ENCODE measurements at regions of chr7 and their contacts with region 1.

Region 1: DNA sequence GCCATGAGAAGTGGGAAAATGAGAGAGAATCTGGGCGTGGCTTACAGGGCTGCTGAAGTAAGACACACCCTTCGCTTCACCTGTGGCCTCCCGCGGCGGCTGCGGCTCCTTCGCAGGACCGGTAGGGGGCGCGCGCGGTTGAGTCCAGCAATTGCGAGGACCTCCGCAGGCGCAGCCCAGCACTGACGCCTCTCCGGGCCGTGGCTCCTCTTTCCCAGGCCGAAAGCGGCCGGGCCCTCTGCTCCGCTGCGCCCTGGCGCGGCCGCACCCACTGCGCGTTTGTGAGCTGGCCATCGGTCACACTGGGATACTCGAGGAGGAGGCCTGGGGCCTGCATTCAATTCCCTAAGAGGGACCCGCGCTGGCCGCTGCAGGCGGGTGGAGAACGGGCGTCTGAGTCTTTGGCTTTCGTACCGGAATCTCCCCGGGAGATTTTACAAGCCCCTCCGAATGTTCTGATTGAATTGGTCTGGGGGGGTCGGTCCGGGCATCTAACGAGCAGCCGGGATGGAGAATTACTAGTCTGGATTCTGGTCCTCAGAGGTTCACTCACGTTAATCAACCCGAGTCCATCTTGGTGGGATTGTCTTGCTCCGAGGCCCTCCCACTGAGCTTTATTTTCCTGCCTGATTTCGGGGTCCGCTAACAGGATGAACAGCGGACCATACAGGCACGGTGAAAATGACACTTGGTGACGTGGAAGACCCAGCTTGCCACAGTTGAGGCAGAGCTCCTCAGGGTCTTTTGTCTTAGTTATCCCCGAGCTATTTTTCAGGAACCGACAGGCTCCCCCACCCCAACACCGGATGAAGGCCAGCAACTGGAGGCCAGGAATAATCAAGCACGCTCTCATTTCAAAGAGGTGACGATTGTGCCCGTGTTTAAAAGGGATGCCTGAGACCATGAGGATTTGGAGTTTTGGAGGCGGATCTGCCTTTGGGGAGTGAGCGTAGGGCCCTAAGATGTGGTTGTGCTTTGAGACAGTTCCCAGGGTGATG is at the start of gene LRRD1:
- DNase-seq: peak; percentile 95
- H3K4me3 ChIP-seq: peak within 1 kb of the TSS; percentile 37 to 56
- H3K27ac ChIP-seq: no peak within 1 kb of the TSS
- H3K4me1 ChIP-seq: peaks cover 0 to 4% of the 10 kb centered on the region in 2 experiments; a peak in 1 of 4 replicates
- H3K27me3 ChIP-seq: no peaks in the 10 kb centered on the region
- CTCF ChIP-seq: peak; percentile 88
- EP300 ChIP-seq: no peak
- RAD21 ChIP-seq: peak; percentile 69
- polyA plus RNA-seq, gene LRRD1: 0.03 TPM in 1 of 2 replicates, not detected in the other

Region 2: DNA sequence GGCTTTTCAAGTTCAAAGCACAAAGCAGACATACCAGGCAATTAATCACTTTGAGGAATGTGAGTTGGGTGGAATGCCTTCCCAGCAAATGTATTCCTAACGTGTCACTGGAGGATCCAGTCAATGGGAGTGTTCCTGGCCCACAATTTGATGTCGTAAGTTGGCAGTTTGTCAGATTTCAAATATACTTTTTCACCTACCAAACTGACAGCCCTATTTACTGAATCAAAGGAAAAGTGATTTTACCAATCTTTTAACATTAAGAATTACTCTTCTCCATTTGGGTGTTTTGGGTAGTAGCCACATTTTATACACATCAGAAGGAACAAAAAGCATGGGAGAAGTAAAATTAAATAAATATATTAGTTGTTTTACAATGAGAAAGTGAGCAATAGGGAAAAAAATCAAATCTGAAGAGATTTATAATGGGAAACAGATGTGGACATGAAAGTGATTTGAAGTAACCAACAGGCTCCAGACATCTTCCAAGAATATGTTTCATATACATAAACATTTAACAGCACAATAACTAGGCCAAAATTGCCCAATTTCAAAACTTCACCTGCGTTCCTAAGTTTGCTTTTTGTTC is 521.6 kb before region 1 on chr7:
- CTCF ChIA-PET with region 1: no interaction called
- POLR2A ChIA-PET with region 1: no interaction called
- DNase-seq: no peak
- H3K4me3 ChIP-seq: no peak overlapping the region
- H3K27ac ChIP-seq: peak overlapping the region in 1 of 2 experiments; percentile 16; a peak in 1 of 4 replicates
- H3K4me1 ChIP-seq: peaks cover 8 to 19% of the 10 kb centered on the region in 2 experiments; a peak in 3 of 4 replicates
- H3K27me3 ChIP-seq: no peaks in the 10 kb centered on the region
- CTCF ChIP-seq: no peak
- EP300 ChIP-seq: no peak
- RAD21 ChIP-seq: no peak

Region 3: DNA sequence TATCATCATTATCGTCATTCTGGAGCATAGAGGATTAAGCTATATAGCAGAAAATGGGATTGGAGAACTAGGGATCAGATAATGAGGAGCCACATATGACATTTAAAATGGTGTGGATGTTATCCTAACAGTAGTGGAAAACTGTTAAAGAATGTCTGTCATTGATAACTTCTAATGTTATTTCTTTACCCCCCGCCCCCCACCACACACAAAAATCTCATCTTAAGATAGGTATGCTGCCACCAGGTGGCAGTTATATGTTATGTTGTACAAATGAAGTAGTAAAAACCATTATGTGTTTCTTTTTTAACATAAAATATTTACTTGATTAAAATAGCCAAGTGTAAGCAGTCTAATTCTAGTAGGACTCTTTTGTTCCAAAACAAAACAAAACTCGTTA is 225.6 kb before region 1 on chr7:
- CTCF ChIA-PET with region 1: no interaction called
- POLR2A ChIA-PET with region 1: no interaction called
- DNase-seq: peak; percentile 20
- H3K4me3 ChIP-seq: no peak overlapping the region
- H3K27ac ChIP-seq: no peak overlapping the region
- H3K4me1 ChIP-seq: no peaks in the 10 kb centered on the region; a peak in 1 of 4 replicates
- H3K27me3 ChIP-seq: no peaks in the 10 kb centered on the region
- CTCF ChIP-seq: peak; percentile 65
- EP300 ChIP-seq: no peak
- RAD21 ChIP-seq: no peak; the same call in 1 of the 2 replicates

Region 4: GRCh38 chr7:92057362-92057761 is 121.9 kb before region 1 on chr7:
- CTCF ChIA-PET with region 1: no interaction called
- POLR2A ChIA-PET with region 1: no interaction called
- DNase-seq: no peak
- H3K4me3 ChIP-seq: no peak overlapping the region
- H3K27ac ChIP-seq: no peak overlapping the region
- H3K4me1 ChIP-seq: peaks cover 4 to 13% of the 10 kb centered on the region in 2 experiments; a peak in 2 of 4 replicates
- H3K27me3 ChIP-seq: no peaks in the 10 kb centered on the region
- CTCF ChIP-seq: no peak
- EP300 ChIP-seq: no peak
- RAD21 ChIP-seq: no peak

Region 5: GRCh38 chr7:92161271-92161670 is 18.0 kb before region 1 on chr7:
- CTCF ChIA-PET with region 1: interaction called, 11 read pairs
- POLR2A ChIA-PET with region 1: no interaction called
- DNase-seq: no peak
- H3K4me3 ChIP-seq: no peak overlapping the region
- H3K27ac ChIP-seq: no peak overlapping the region
- H3K4me1 ChIP-seq: no peaks in the 10 kb centered on the region; a peak in 1 of 4 replicates
- H3K27me3 ChIP-seq: no peaks in the 10 kb centered on the region
- CTCF ChIP-seq: no peak
- EP300 ChIP-seq: no peak
- RAD21 ChIP-seq: no peak

Region 6: GRCh38 chr7:92192326-92192725 is 13.1 kb after region 1 on chr7:
- CTCF ChIA-PET with region 1: interaction called, 15 read pairs
- POLR2A ChIA-PET with region 1: no interaction called
- DNase-seq: no peak
- H3K4me3 ChIP-seq: no peak overlapping the region
- H3K27ac ChIP-seq: no peak overlapping the region
- H3K4me1 ChIP-seq: no peaks in the 10 kb centered on the region
- H3K27me3 ChIP-seq: no peaks in the 10 kb centered on the region
- CTCF ChIP-seq: no peak
- EP300 ChIP-seq: no peak
- RAD21 ChIP-seq: no peak

Region 7: DNA sequence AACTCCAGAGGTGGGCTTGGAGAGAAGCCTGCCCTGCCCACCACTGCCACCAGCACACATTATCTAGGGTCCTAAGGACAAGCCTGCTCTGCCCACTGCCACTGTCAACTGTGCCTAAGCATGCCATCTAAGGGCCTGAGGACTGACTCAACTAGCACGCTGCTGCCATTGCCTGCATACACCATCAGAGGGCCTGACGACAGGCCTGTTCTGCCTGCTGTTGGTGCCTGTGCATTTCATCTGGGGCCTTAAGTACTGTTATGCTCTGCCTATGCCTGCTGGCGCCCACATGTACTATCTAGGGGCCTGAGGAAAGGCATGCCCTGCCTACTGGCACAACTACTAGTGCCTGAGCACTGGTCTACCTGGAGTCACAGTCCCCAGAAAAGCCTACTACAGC is 26.8 kb after region 1 on chr7:
- CTCF ChIA-PET with region 1: interaction called, 15 read pairs
- POLR2A ChIA-PET with region 1: no interaction called
- DNase-seq: no peak
- H3K4me3 ChIP-seq: no peak overlapping the region
- H3K27ac ChIP-seq: no peak overlapping the region
- H3K4me1 ChIP-seq: no peaks in the 10 kb centered on the region
- H3K27me3 ChIP-seq: no peaks in the 10 kb centered on the region
- CTCF ChIP-seq: no peak
- EP300 ChIP-seq: no peak
- RAD21 ChIP-seq: no peak

Region 8: DNA sequence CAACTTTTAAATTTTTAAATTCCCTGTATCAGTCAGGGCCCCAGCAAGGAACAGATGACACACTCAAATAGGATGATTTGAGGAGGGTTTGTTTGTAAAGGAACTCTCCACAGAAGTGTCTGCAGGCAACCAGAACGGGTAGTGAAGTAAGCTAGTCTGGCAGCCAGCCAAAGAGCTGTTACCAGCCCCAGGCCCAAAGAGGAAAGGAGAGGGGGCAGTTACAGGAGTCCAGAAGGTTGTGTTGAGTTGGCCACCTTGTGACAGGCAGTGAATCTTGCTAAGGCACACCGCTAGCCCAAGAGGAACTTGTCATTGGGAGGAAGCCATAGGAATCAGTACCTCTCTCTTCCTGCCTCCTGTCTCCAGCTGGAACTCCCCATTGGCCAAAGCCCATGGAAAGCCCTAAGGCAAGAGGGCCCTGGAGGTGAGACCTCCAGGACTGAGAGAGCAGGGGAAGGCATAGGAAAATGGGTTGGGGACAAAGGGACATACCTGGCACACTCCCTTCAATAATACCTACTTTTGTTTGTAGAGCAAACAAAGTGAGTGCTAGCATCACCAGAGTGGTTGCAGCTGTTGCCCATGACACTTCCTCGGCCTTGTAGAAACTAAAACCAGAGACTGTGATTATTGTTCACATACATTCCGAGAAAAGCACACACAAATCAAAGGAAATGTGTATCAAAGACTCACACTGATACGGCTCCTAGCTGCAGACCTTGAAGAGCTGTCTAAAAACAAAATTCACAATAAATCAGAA is 242.6 kb after region 1 on chr7:
- CTCF ChIA-PET with region 1: interaction called, 10 read pairs
- POLR2A ChIA-PET with region 1: no interaction called
- DNase-seq: peak; percentile 40
- H3K4me3 ChIP-seq: no peak overlapping the region
- H3K27ac ChIP-seq: no peak overlapping the region
- H3K4me1 ChIP-seq: peaks cover 0 to 3% of the 10 kb centered on the region in 2 experiments; a peak in 1 of 4 replicates
- H3K27me3 ChIP-seq: no peaks in the 10 kb centered on the region
- CTCF ChIP-seq: no peak
- EP300 ChIP-seq: no peak
- RAD21 ChIP-seq: no peak

Measured in SK-N-SH (cell line).